ENCODE measurements at regions of chr12 and their contacts with region 1.

Region 1: GRCh38 chr12:107402041-107403022 is 283.3 kb upstream of the PWP1 start:
- DNase-seq: peak; percentile 78
- ATAC-seq: peak; percentile 78
- H3K4me3 Mint-ChIP-seq: no peak overlapping the region
- H3K27ac Mint-ChIP-seq: no peak overlapping the region
- H3K4me1 Mint-ChIP-seq: peaks cover 8% of the 10 kb centered on the region
- H3K27me3 Mint-ChIP-seq: no peaks in the 10 kb centered on the region

Region 2: DNA sequence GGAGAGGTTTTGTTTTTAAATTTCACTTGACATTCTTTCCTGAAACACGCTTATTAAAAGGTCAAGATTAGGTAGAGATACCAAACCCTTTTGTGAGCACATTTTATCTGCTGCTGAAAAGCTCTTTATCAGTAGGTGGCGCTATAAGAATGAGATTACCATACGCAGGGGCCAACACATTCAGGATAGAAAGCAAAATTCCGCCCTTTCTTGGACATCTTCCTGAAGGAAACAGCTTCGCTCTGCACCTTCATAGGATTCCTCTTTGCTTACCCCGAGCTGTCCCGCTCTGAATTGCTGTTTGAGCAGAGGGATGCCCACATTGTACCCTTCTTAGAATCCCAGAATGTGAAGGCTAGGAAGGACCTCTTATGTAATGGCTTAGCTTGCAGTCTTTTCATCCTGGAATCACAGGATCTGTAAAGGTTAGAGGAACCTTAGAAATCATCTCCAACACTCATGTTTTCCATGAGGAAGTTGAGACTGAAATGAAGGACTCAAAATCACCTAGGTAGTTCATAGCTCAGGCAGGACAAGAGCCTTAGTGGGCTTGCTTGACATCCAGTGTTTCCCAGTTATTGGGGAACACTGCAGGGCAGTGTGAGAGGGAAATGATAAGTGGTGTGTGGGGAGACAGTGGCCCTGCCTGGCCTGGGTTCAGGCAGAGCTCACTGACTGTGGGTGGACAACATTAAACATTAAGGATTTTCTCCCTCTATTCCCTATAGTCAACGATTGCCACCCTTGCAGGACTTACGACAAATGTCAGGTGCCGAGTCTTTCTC is 270.3 kb before region 1 on chr12:
- CTCF ChIA-PET with region 1: interaction called, 50 read pairs
- DNase-seq: peak; percentile 40
- ATAC-seq: no peak
- H3K4me3 Mint-ChIP-seq: no peak overlapping the region
- H3K27ac Mint-ChIP-seq: no peak overlapping the region
- H3K4me1 Mint-ChIP-seq: peaks cover 7% of the 10 kb centered on the region
- H3K27me3 Mint-ChIP-seq: peaks cover 5% of the 10 kb centered on the region

Region 3: GRCh38 chr12:107356266-107356936 is 45.9 kb before region 1 on chr12:
- CTCF ChIA-PET with region 1: interaction called, 15 read pairs
- DNase-seq: peak; percentile 45
- ATAC-seq: peak; percentile 89
- H3K4me3 Mint-ChIP-seq: no peak overlapping the region
- H3K27ac Mint-ChIP-seq: no peak overlapping the region
- H3K4me1 Mint-ChIP-seq: peaks cover 56% of the 10 kb centered on the region
- H3K27me3 Mint-ChIP-seq: peaks cover 2% of the 10 kb centered on the region

Region 4: GRCh38 chr12:107385509-107385908 is 16.8 kb before region 1 on chr12:
- CTCF ChIA-PET with region 1: interaction called, 11 read pairs
- DNase-seq: no peak
- ATAC-seq: no peak
- H3K4me3 Mint-ChIP-seq: no peak overlapping the region
- H3K27ac Mint-ChIP-seq: no peak overlapping the region
- H3K4me1 Mint-ChIP-seq: peaks cover 8% of the 10 kb centered on the region
- H3K27me3 Mint-ChIP-seq: no peaks in the 10 kb centered on the region

Region 5: DNA sequence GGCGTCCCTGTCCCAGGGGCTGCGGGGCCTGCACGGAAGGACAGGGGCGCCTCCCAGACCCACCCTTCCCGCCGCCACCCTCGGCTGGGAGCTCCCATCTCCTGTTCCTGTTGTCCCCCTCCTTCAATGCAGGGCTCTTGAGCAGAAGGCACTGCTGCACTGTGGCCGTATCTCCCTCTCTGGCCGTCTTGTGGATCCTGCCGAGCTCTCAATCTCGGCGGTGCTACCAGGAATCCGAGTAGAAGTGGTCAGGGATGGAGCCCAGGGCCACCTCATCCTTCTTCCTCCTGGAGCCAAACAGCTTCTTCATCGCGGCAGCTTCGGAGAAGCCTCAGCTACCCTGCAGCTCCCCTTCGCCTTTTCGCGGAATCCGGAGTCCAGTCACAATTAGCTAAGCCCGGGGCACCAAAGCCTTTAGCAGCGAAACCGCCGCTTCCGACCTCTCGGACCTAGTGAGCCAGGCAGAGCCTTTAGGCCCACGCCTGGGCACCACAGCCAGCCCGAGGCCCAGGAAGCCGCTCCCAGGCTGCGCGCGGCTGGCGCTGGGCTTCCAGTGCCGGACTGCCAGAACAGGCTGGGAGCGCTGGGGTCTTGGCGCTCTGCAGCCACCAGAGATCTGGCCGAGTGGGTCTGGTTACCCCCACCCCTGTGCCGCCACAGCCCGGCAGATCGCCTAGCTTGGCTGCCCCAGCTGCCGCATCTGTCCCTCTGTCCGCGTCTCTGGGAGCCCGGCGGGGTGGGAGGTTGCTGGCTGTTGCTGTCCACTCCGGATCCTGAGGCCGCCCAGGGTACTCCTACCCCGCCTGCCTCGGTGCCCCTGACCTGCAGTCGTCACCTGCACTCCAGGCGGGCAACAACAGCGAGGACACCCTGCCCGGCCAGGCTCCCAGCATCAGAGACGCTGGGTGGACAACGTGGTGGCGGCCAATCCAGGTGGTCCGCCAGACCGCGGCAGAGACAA is 441.3 kb after region 1 on chr12:
- CTCF ChIA-PET with region 1: no interaction called
- DNase-seq: no peak
- ATAC-seq: no peak
- H3K4me3 Mint-ChIP-seq: no peak overlapping the region
- H3K27ac Mint-ChIP-seq: no peak overlapping the region
- H3K4me1 Mint-ChIP-seq: peaks cover 8% of the 10 kb centered on the region
- H3K27me3 Mint-ChIP-seq: peaks cover 76% of the 10 kb centered on the region